ENCODE measurements at regions of chr19 and their contacts with region 1.

Region 1: GRCh38 chr19:13022859-13023636 is 27.8 kb downstream of the NFIX start:
- DNase-seq: no peak
- ATAC-seq: peak; percentile 72
- H3K4me3 ChIP-seq: peak overlapping the region; percentile 53 to 81
- H3K27ac ChIP-seq: peak overlapping the region; percentile 99
- H3K4me1 ChIP-seq: peaks cover 43% of the 10 kb centered on the region
- H3K27me3 ChIP-seq: no peaks in the 10 kb centered on the region
- CTCF ChIP-seq: no peak

Region 2: GRCh38 chr19:12965017-12965811 is 57.8 kb before region 1 on chr19:
- CTCF ChIA-PET with region 1: interaction called, 15 read pairs
- POLR2A ChIA-PET with region 1: no interaction called
- in situ Hi-C with region 1: no loop called
- intact Hi-C with region 1: no loop called
- DNase-seq: peak; percentile 36
- ATAC-seq: peak; percentile 98
- H3K4me3 ChIP-seq: peak overlapping the region; percentile 49 to 79
- H3K27ac ChIP-seq: peak overlapping the region; percentile 82
- H3K4me1 ChIP-seq: peaks cover 10% of the 10 kb centered on the region
- H3K27me3 ChIP-seq: no peaks in the 10 kb centered on the region
- CTCF ChIP-seq: peak; percentile 97

Region 3: DNA sequence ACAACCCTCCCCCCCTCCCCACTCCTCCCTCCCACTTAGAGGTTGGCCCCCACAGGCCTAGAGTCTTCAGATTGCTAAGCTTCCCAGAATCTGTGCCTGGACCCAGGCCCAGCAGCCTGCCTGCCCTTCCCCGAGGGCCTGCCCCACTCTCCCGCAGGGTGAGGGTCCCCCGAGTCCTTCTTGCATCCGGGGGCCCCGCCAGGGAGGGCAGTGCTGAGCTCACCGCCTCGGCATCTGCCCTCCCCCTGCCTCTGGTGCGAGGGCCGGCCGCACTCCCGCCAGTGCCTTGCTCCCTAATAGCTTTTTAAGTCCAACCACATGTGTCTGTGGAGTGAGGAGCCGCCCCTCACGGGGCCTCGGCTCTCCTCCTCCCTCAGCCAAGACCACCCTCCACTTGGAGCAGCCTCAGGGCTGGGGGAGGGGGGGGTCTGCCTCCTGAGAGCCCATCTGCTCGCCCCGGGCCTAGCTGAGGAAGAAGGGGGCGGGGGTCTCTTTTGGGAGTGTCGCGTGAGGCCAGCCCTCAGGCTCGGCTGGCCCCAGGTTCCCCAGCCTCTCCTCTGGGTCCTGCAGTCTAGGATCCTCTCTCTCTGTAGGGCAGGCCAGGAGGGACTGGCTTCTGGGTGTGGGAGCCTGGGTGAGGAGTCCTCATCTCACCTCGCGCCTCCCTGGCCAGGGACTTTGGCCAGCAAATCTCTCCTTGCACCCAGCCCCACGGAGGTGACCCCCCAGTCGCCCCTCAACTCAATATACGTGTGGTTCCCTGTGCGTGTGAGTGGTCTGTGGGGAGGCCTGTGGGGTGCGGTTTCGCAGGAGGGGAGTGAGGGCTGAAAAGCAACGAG is 32.4 kb after region 1 on chr19:
- CTCF ChIA-PET with region 1: interaction called, 3 read pairs
- POLR2A ChIA-PET with region 1: no interaction called
- in situ Hi-C with region 1: no loop called
- intact Hi-C with region 1: loop called (anchors 5 kb)
- DNase-seq: no peak
- ATAC-seq: 0 out of 2 replicates have a peak, but pooled peaks have one; percentile 10
- H3K4me3 ChIP-seq: 0 out of 4 replicates have a peak overlapping the region, but pooled peaks of 1 of the 2 experiments have one; percentile 20
- H3K27ac ChIP-seq: peak overlapping the region; percentile 99
- H3K4me1 ChIP-seq: peaks cover 97% of the 10 kb centered on the region
- H3K27me3 ChIP-seq: no peaks in the 10 kb centered on the region
- CTCF ChIP-seq: no peak